ENCODE measurements at regions of chrX and their contacts with region 1.

Region 1: GRCh38 chrX:68511255-68511654 is 12.4 kb downstream of the YIPF6 start:
- DNase-seq: peak; percentile 39
- ATAC-seq: peak; percentile 61
- H3K4me3 Mint-ChIP-seq: no peak overlapping the region
- H3K27ac Mint-ChIP-seq: no peak overlapping the region
- H3K4me1 Mint-ChIP-seq: peaks cover 24% of the 10 kb centered on the region
- H3K27me3 Mint-ChIP-seq: no peaks in the 10 kb centered on the region

Region 2: GRCh38 chrX:68490599-68490998 is 20.7 kb before region 1 on chrX:
- CTCF ChIA-PET with region 1: no interaction called
- POLR2A ChIA-PET with region 1: no interaction called
- intact Hi-C with region 1: no loop called
- DNase-seq: no peak
- ATAC-seq: peak; percentile 42
- H3K4me3 Mint-ChIP-seq: no peak overlapping the region
- H3K27ac Mint-ChIP-seq: no peak overlapping the region
- H3K4me1 Mint-ChIP-seq: peaks cover 2% of the 10 kb centered on the region
- H3K27me3 Mint-ChIP-seq: peaks cover 5% of the 10 kb centered on the region

Region 3: DNA sequence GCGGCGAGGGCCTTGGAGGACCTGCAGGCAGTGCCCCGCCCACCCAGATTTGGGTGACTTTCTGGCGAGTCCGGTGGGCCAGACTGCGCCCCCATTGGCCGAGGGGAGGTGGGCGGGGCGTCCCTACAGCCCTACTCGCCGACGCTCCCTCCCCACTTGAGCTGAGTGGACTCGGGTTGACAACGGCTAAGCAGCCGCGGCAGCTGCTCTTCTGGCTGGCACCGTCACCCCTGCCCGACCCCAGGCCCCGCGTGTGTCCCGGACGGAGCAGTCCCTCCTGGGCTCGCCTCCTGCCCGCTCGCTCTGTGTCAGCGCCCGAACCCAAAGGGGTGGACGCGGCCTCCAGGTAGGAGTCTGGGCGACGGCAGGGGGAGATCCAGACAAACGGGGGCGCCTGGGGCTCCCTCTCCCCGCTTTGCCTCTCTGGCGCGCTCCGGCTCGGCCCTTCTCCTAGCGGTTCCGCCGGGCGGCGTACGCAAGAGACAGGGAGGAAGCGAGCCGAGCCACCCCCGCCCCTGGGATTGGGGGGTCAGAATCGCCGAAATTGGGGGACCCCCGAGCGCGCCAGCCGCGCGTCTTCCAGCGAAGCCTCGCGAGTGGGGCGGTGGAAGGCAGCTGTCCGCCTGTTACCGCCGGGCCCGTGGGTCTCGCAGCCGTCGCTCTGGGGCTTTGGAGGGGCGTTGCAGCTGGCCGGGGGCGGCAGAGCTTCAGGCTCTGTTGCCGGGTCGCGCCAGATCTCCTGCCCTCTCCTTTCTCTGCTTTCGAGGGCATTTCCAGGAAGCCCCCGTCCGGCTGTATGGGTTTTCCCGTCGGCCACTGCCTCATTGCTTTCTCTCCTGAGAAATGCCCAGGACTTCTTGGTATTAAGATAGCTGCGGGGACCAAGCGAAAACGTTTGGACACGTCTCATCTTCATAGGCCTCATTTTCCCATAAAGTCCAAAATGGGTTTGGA is 182.5 kb after region 1 on chrX:
- CTCF ChIA-PET with region 1: no interaction called
- POLR2A ChIA-PET with region 1: no interaction called
- intact Hi-C with region 1: loop called in 1 of 2 experiments (anchors 5 kb)
- DNase-seq: peak; percentile 16
- ATAC-seq: no peak
- H3K4me3 Mint-ChIP-seq: peak overlapping the region; percentile 15
- H3K27ac Mint-ChIP-seq: no peak overlapping the region
- H3K4me1 Mint-ChIP-seq: peaks cover 5% of the 10 kb centered on the region
- H3K27me3 Mint-ChIP-seq: peaks cover 16% of the 10 kb centered on the region

Region 4: GRCh38 chrX:68710870-68711576 is 199.8 kb after region 1 on chrX:
- CTCF ChIA-PET with region 1: interaction called, 3 read pairs
- POLR2A ChIA-PET with region 1: no interaction called
- intact Hi-C with region 1: loop called in 1 of 2 experiments (anchors 1 kb)
- DNase-seq: peak; percentile 48
- ATAC-seq: no peak
- H3K4me3 Mint-ChIP-seq: no peak overlapping the region
- H3K27ac Mint-ChIP-seq: no peak overlapping the region
- H3K4me1 Mint-ChIP-seq: no peaks in the 10 kb centered on the region
- H3K27me3 Mint-ChIP-seq: no peaks in the 10 kb centered on the region

Region 5: GRCh38 chrX:68807818-68808217 is 296.6 kb after region 1 on chrX:
- CTCF ChIA-PET with region 1: no interaction called
- POLR2A ChIA-PET with region 1: no interaction called
- intact Hi-C with region 1: loop called in 1 of 2 experiments (anchors 5 kb)
- DNase-seq: no peak
- ATAC-seq: no peak
- H3K4me3 Mint-ChIP-seq: no peak overlapping the region
- H3K27ac Mint-ChIP-seq: no peak overlapping the region
- H3K4me1 Mint-ChIP-seq: no peaks in the 10 kb centered on the region
- H3K27me3 Mint-ChIP-seq: peaks cover 11% of the 10 kb centered on the region